ENCODE measurements at regions of chr3 and their contacts with region 1.

Region 1: DNA sequence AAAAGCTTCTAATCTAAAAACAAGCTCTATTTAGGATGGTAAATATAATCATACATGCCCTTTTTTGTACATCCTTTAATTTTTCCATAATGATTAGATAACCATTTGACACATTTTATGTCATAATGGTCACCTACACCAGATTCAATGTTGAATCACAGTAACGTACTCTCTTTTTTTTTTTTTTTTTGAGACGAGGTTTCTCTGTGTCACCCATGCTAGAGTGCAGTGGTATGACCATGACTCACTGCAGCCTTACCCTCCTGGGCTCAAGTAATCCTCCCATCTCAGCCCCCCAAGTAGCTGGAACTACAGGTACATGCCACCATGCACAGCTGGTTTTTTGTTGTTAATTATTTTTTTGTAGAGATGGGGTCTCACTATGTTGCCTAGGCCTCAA is 49.2 kb downstream of the PROS1 start:
- DNase-seq: no peak
- ATAC-seq: no peak

Region 2: GRCh38 chr3:93979833-93980676 is 55.6 kb after region 1 on chr3 and contains the start of gene ARL13B:
- intact Hi-C with region 1: loop called in 1 of 2 experiments (anchors 10 kb)
- DNase-seq: peak; percentile 99
- ATAC-seq: peak; percentile 100
- total RNA-seq, gene ARL13B: 6.7 to 8.6 TPM

Measured in left cardiac atrium (tissue), 4 donors.